CD4-positive, alpha-beta T cell (primary cell): ENCODE measurements at regions of chr6 and their contacts with region 1.

Region 1: GRCh38 chr6:99613409-99613704 is 6.7 kb downstream of the PRDM13 start:
- DNase-seq: peak in 5 of 14 experiments; percentile 27 to 66 (median 35)
- ATAC-seq: peak; percentile 51
- H3K4me3 ChIP-seq: peak overlapping the region; percentile 43
- H3K4me3 Mint-ChIP-seq: no peak overlapping the region
- H3K27ac ChIP-seq: no peak overlapping the region
- H3K27ac Mint-ChIP-seq: no peak overlapping the region
- H3K4me1 ChIP-seq: peaks cover 38% of the 10 kb centered on the region
- H3K4me1 Mint-ChIP-seq: peaks cover 38% of the 10 kb centered on the region
- H3K27me3 ChIP-seq: peaks cover 72 to 99% of the 10 kb centered on the region in 2 experiments
- H3K27me3 Mint-ChIP-seq: peaks cover 88% of the 10 kb centered on the region
- CTCF ChIP-seq: no peak

Region 2: DNA sequence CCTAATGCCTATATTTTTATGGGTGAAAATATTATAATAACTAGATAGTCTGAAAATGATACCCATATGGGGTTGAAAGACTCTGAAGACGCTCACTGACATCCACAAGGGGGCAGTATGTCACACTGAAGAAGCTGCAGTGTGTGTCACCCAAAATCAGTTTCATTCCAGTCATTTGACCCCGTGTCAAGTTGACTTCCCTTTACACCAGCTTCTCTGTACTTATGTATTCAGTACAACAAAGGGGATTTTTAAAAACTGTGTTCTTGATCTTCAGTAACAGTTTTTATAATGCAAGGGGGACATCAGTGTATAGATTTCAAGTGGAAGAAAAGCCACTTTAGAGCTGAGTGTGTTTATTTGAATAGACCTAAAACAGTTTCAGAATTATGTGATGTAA is 283.2 kb before region 1 on chr6:
- CTCF ChIA-PET with region 1: no interaction called
- POLR2A ChIA-PET with region 1: no interaction called
- intact Hi-C with region 1: no loop called
- DNase-seq: peak; percentile 6 to 74 (median 30)
- ATAC-seq: peak; percentile 54
- H3K4me3 ChIP-seq: no peak overlapping the region
- H3K4me3 Mint-ChIP-seq: no peak overlapping the region
- H3K27ac ChIP-seq: no peak overlapping the region
- H3K27ac Mint-ChIP-seq: no peak overlapping the region
- H3K4me1 ChIP-seq: no peaks in the 10 kb centered on the region
- H3K4me1 Mint-ChIP-seq: no peaks in the 10 kb centered on the region
- H3K27me3 ChIP-seq: peaks cover 0 to 5% of the 10 kb centered on the region in 2 experiments
- H3K27me3 Mint-ChIP-seq: peaks cover 14% of the 10 kb centered on the region
- CTCF ChIP-seq: peak; percentile 72

Region 3: DNA sequence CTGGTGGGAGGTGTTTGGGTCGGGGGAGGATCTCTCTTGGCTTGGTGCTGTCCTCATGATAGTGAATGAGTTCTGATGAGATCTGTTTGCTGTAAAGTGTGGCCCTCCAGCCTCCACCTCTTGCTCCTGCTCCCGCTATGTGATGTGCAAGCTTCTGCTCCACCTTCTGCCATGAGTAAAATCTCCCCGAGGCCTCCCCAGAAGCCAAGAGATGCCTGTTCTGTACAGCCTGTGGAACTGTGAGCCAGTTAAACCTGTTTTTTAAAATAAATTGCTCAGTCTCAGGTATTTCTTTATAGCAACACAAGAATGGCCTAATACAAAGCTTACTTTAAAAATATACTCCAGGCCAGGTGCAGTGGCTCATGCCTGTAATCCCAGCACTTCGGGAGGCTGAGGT is 33.6 kb before region 1 on chr6:
- CTCF ChIA-PET with region 1: no interaction called
- POLR2A ChIA-PET with region 1: no interaction called
- intact Hi-C with region 1: no loop called
- DNase-seq: no peak
- ATAC-seq: no peak
- H3K4me3 ChIP-seq: no peak overlapping the region
- H3K4me3 Mint-ChIP-seq: no peak overlapping the region
- H3K27ac ChIP-seq: no peak overlapping the region
- H3K27ac Mint-ChIP-seq: no peak overlapping the region
- H3K4me1 ChIP-seq: no peaks in the 10 kb centered on the region
- H3K4me1 Mint-ChIP-seq: no peaks in the 10 kb centered on the region
- H3K27me3 ChIP-seq: peaks cover 0 to 20% of the 10 kb centered on the region in 2 experiments
- H3K27me3 Mint-ChIP-seq: peaks cover 53% of the 10 kb centered on the region
- CTCF ChIP-seq: no peak

Region 4: GRCh38 chr6:100464903-100465700 is 851.7 kb after region 1 on chr6 and contains the start of gene SIM1:
- CTCF ChIA-PET with region 1: no interaction called
- POLR2A ChIA-PET with region 1: no interaction called
- intact Hi-C with region 1: loop called in 1 of 2 experiments (anchors 10 kb)
- DNase-seq: no peak
- ATAC-seq: no peak
- H3K4me3 ChIP-seq: no peak within 1 kb of the TSS
- H3K4me3 Mint-ChIP-seq: peak within 1 kb of the TSS; percentile 23
- H3K27ac ChIP-seq: no peak within 1 kb of the TSS
- H3K27ac Mint-ChIP-seq: no peak within 1 kb of the TSS
- H3K4me1 ChIP-seq: peaks cover 39% of the 10 kb centered on the region
- H3K4me1 Mint-ChIP-seq: peaks cover 34% of the 10 kb centered on the region
- H3K27me3 ChIP-seq: peaks cover 97 to 98% of the 10 kb centered on the region in 2 experiments
- H3K27me3 Mint-ChIP-seq: peaks cover 98% of the 10 kb centered on the region
- CTCF ChIP-seq: no peak
- total RNA-seq, gene SIM1: not detected